Psoas muscle (tissue), 8 donors: ENCODE measurements at regions of chr9 and their contacts with region 1.

Region 1: GRCh38 chr9:68769852-68770251 is 64.8 kb downstream of the PIP5K1B start:
- DNase-seq: no peak
- ATAC-seq: no peak
- H3K4me3 ChIP-seq: no peak overlapping the region
- H3K27ac ChIP-seq: no peak overlapping the region
- H3K4me1 ChIP-seq: no peaks in the 10 kb centered on the region
- H3K27me3 ChIP-seq: peaks cover 0 to 2% (median 0%) of the 10 kb centered on the region in 3 donors
- CTCF ChIP-seq: no peak

Region 2: DNA sequence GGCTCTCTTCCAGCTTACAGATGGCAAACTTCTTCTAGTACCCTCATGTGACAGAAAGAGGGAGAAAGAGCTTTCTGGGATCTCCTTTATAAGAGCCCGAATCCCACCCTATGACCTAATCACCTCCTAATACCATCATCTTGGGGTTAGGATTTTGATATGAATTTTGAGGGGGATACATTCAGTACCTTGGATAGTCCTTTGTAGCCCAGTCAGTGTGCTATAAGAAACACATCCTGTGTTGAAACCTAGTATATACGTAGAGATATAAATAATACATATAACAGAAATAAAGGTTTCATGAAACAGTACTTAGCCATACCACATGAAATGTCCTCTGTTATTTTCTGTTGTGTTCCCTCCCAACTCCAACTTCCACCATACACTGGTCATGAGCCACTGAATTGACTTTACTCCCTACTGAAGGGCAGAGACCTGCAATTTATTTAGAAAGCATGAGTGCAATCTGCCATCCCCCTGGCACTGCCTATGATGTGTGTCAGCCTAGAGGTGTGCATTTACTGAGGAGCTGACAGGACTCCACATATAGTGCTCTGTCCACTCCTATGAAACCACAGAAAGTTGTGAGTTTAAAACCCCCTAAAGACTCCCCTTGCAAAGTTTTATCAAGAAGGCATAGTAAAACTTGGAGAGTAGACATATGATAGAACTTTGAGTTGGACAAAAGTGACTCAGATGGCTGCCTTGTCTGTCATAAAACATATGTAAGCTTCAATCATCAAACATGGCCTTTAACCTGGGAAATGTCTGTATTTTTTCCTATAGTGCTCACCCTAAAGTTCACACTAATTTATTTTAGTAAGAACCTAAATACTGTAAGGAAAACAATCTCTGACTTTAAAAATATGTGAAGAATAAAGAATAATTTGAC is 52.1 kb before region 1 on chr9:
- intact Hi-C with region 1: no loop called
- DNase-seq: no peak
- ATAC-seq: no peak
- H3K4me3 ChIP-seq: no peak overlapping the region
- H3K27ac ChIP-seq: no peak overlapping the region
- H3K4me1 ChIP-seq: no peaks in the 10 kb centered on the region
- H3K27me3 ChIP-seq: peaks cover 0 to 6% (median 3%) of the 10 kb centered on the region in 3 donors
- CTCF ChIP-seq: no peak

Region 3: DNA sequence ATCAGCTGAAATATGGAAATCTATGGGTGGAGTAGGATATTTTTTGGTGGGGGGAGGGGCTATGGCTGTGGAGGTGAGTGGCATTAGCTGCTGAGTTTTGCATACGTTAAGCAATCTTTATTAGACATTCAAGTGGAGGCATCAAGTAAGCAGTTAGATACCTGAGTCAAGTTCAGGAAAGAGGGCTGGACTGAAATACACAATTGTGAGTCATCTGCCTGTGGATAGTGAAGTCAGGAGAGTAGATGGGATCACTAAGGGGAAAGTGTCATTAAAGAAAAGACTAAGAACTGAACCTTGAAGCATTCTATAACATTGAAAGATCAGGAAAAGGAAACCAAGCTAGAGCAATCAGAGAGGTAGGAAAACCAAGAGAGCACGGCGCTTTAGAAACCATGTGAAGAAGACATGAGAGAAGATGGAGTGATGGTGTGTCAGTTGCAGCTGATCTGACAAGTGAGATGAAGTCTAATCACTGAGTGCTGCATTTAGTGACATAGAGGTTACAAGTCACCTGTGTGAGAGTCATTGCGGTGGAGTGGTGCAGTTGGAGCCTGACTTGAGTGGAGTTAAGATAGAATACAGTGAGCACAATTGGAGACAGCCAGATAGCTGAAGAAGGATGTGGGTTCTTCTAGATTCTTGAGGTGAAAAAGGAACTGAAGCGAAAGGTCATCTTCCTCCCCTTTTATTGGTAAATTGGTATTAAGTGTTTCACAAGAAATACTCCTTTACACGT is 23.9 kb after region 1 on chr9:
- intact Hi-C with region 1: no loop called
- DNase-seq: no peak
- ATAC-seq: no peak
- H3K4me3 ChIP-seq: no peak overlapping the region
- H3K27ac ChIP-seq: no peak overlapping the region
- H3K4me1 ChIP-seq: no peaks in the 10 kb centered on the region
- H3K27me3 ChIP-seq: no peaks in the 10 kb centered on the region
- CTCF ChIP-seq: no peak

Region 4: GRCh38 chr9:68822596-68823165 is 52.8 kb after region 1 on chr9:
- intact Hi-C with region 1: loop called in 1 of 2 experiments (anchors 5 kb)
- DNase-seq: peak in 1 of 2 donors; percentile 72
- ATAC-seq: peak; percentile 66 to 96 (median 80)
- H3K4me3 ChIP-seq: peak overlapping the region; percentile 17
- H3K27ac ChIP-seq: peak overlapping the region; percentile 25
- H3K4me1 ChIP-seq: no peaks in the 10 kb centered on the region
- H3K27me3 ChIP-seq: no peaks in the 10 kb centered on the region
- CTCF ChIP-seq: no peak

Region 5: GRCh38 chr9:68832853-68833518 is 63.1 kb after region 1 on chr9:
- intact Hi-C with region 1: no loop called
- DNase-seq: no peak
- ATAC-seq: no peak
- H3K4me3 ChIP-seq: no peak overlapping the region
- H3K27ac ChIP-seq: no peak overlapping the region
- H3K4me1 ChIP-seq: peaks cover 4% of the 10 kb centered on the region
- H3K27me3 ChIP-seq: no peaks in the 10 kb centered on the region
- CTCF ChIP-seq: no peak

Region 6: DNA sequence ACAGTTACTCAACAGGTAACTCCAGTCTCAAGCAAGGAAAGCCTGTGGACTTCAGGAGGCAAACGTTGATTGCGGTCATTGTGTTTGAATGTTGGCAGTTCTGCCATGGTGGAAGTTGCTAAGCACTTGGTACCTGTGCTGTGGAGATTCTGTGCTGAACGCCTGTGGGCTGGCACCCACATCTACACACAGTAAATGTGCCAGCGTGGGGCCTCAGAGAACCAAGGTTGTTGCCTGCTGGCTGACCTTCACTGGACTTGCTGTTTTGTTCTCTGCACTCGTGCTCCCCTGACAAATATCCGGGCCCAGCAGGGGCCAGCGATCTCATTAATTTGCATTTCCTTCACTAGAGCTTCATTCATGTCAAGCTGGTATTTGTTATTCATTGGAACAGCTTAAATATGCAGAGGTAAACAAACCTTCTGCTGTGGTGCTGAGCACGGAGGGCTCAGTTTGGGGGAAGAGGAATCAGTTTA is 102.2 kb after region 1 on chr9:
- intact Hi-C with region 1: no loop called
- DNase-seq: no peak
- ATAC-seq: no peak
- H3K4me3 ChIP-seq: no peak overlapping the region
- H3K27ac ChIP-seq: no peak overlapping the region
- H3K4me1 ChIP-seq: no peaks in the 10 kb centered on the region
- H3K27me3 ChIP-seq: no peaks in the 10 kb centered on the region
- CTCF ChIP-seq: no peak